ENCODE measurements at regions of chr14 and their contacts with region 1.

Region 1: GRCh38 chr14:89720741-89721315 is 233.7 kb downstream of the EFCAB11 start:
- DNase-seq: peak; percentile 57 to 93 (median 72)
- ATAC-seq: peak; percentile 93
- H3K4me3 ChIP-seq: peak overlapping the region; percentile 0
- H3K4me3 Mint-ChIP-seq: peak overlapping the region; percentile 65
- H3K27ac ChIP-seq: peak overlapping the region; percentile 85 to 88
- H3K27ac Mint-ChIP-seq: peak overlapping the region; percentile 95
- H3K4me1 ChIP-seq: peaks cover 88% of the 10 kb centered on the region
- H3K4me1 Mint-ChIP-seq: peaks cover 85% of the 10 kb centered on the region
- H3K27me3 ChIP-seq: no peaks in the 10 kb centered on the region
- H3K27me3 Mint-ChIP-seq: no peaks in the 10 kb centered on the region
- CTCF ChIP-seq: no peak

Region 2: GRCh38 chr14:89430391-89431236 is 290.2 kb before region 1 on chr14:
- CTCF ChIA-PET with region 1: no interaction called
- POLR2A ChIA-PET with region 1: interaction called, 12 read pairs
- intact Hi-C with region 1: no loop called
- DNase-seq: peak in 4 of 14 experiments; percentile 23 to 79 (median 76)
- ATAC-seq: peak; percentile 83
- H3K4me3 ChIP-seq: peak overlapping the region; percentile 50
- H3K4me3 Mint-ChIP-seq: peak overlapping the region; percentile 76
- H3K27ac ChIP-seq: peak overlapping the region; percentile 57 to 59
- H3K27ac Mint-ChIP-seq: peak overlapping the region; percentile 80
- H3K4me1 ChIP-seq: peaks cover 24% of the 10 kb centered on the region
- H3K4me1 Mint-ChIP-seq: peaks cover 54% of the 10 kb centered on the region
- H3K27me3 ChIP-seq: no peaks in the 10 kb centered on the region
- H3K27me3 Mint-ChIP-seq: no peaks in the 10 kb centered on the region
- CTCF ChIP-seq: no peak

Region 3: GRCh38 chr14:89589400-89590118 is 131.3 kb before region 1 on chr14:
- CTCF ChIA-PET with region 1: interaction called, 3 read pairs
- POLR2A ChIA-PET with region 1: interaction called, 5 read pairs
- intact Hi-C with region 1: loop called in 1 of 2 experiments (anchors 5 kb)
- DNase-seq: peak in 3 of 14 experiments; percentile 12 to 51 (median 49)
- ATAC-seq: no peak
- H3K4me3 ChIP-seq: no peak overlapping the region
- H3K4me3 Mint-ChIP-seq: peak overlapping the region; percentile 17
- H3K27ac ChIP-seq: no peak overlapping the region
- H3K27ac Mint-ChIP-seq: peak overlapping the region; percentile 2
- H3K4me1 ChIP-seq: peaks cover 39% of the 10 kb centered on the region
- H3K4me1 Mint-ChIP-seq: peaks cover 86% of the 10 kb centered on the region
- H3K27me3 ChIP-seq: no peaks in the 10 kb centered on the region
- H3K27me3 Mint-ChIP-seq: no peaks in the 10 kb centered on the region
- CTCF ChIP-seq: no peak

Region 4: DNA sequence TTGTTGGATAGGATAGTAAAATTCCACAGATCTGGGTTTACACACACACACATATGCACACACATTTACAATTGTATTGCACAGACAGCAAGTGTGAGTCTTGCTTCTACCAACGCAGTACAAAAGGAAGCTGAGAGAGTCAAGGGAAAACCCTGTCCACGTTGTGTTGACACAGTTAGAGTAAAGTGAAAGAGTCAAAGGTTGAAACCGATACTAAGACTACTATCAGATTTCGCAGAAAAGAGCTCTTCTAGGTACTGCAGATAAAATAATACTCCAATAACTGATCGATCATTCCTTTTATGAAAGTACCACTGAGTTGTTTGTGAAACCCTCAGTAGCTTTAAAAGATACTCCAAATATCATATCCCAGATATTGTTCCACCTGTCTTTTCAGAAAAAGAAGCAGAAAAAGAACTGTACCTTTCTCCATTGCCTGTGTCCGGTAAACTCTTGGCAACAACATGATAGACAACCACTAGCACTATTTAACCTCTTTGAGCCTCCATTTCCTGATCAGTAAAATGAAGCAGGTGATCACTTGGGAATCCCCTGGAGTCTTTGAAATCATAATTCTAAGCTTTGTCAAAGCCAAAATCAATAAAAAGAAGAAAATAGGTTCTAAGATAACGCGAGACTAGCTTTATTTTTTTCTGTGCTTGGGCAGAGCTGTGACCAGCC is 79.2 kb before region 1 on chr14:
- CTCF ChIA-PET with region 1: interaction called, 3 read pairs
- POLR2A ChIA-PET with region 1: interaction called, 32 read pairs
- intact Hi-C with region 1: no loop called
- DNase-seq: peak in 4 of 14 experiments; percentile 27 to 73 (median 70)
- ATAC-seq: peak; percentile 83
- H3K4me3 ChIP-seq: peak overlapping the region; percentile 24
- H3K4me3 Mint-ChIP-seq: peak overlapping the region; percentile 72
- H3K27ac ChIP-seq: peak overlapping the region; percentile 25 to 80
- H3K27ac Mint-ChIP-seq: peak overlapping the region; percentile 94
- H3K4me1 ChIP-seq: peaks cover 13% of the 10 kb centered on the region
- H3K4me1 Mint-ChIP-seq: peaks cover 59% of the 10 kb centered on the region
- H3K27me3 ChIP-seq: no peaks in the 10 kb centered on the region
- H3K27me3 Mint-ChIP-seq: no peaks in the 10 kb centered on the region
- CTCF ChIP-seq: no peak

Region 5: GRCh38 chr14:89701211-89702043 is 19.4 kb before region 1 on chr14:
- CTCF ChIA-PET with region 1: interaction called, 18 read pairs
- POLR2A ChIA-PET with region 1: interaction called, 35 read pairs
- intact Hi-C with region 1: loop called (anchors 1 to 2 kb)
- DNase-seq: peak; percentile 70 to 92 (median 80)
- ATAC-seq: peak; percentile 86
- H3K4me3 ChIP-seq: peak overlapping the region; percentile 62
- H3K4me3 Mint-ChIP-seq: peak overlapping the region; percentile 87
- H3K27ac ChIP-seq: peak overlapping the region; percentile 58 to 70
- H3K27ac Mint-ChIP-seq: peak overlapping the region; percentile 82
- H3K4me1 ChIP-seq: peaks cover 26% of the 10 kb centered on the region
- H3K4me1 Mint-ChIP-seq: peaks cover 49% of the 10 kb centered on the region
- H3K27me3 ChIP-seq: no peaks in the 10 kb centered on the region
- H3K27me3 Mint-ChIP-seq: no peaks in the 10 kb centered on the region
- CTCF ChIP-seq: no peak

Region 6: DNA sequence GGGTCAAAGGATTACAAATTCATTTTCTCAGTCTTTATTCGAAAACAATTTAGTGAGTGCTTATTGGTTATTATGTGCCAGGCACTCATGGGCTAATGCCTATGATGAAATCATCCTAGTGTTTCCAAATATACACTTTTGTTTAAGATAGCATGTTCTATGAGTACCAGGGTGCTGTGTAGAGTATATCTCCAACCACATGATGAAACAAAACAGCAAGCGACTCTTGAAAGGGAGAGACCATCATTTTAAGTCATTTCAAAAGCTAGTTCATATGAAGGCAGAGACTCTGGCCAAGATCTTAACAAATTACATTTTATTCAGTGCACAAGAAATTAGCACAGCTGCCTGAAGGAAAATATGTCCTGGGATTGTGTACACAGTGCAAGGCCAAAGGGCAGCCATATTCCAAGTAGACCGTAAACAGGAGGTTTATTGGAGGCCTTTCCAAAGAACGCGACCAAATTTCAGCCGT is 29.5 kb after region 1 on chr14:
- CTCF ChIA-PET with region 1: interaction called, 3 read pairs
- POLR2A ChIA-PET with region 1: interaction called, 14 read pairs
- intact Hi-C with region 1: no loop called
- DNase-seq: no peak
- ATAC-seq: no peak
- H3K4me3 ChIP-seq: no peak overlapping the region
- H3K4me3 Mint-ChIP-seq: no peak overlapping the region
- H3K27ac ChIP-seq: no peak overlapping the region
- H3K27ac Mint-ChIP-seq: no peak overlapping the region
- H3K4me1 ChIP-seq: no peaks in the 10 kb centered on the region
- H3K4me1 Mint-ChIP-seq: peaks cover 28% of the 10 kb centered on the region
- H3K27me3 ChIP-seq: no peaks in the 10 kb centered on the region
- H3K27me3 Mint-ChIP-seq: no peaks in the 10 kb centered on the region
- CTCF ChIP-seq: no peak

Region 7: DNA sequence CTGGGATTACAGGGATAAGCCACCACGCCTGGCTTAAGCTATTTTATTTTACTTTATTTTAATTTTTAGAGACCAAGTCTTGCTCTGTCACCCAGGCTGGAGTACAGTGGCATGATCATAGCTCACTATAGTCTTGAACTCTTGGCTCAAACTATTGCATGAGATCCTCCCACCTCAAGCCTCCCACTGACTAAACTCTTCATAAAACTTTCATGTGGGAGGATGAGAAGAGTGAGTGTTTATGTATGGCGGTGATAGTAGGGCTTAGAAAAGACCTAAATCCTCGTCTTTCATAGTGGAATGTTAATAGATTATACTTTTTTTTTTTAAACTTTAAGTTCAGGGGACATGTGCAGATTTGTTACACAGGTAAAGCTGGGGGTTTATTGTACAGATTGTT is 1812.8 kb after region 1 on chr14:
- CTCF ChIA-PET with region 1: no interaction called
- POLR2A ChIA-PET with region 1: no interaction called
- intact Hi-C with region 1: no loop called
- DNase-seq: no peak
- ATAC-seq: no peak
- H3K4me3 ChIP-seq: no peak overlapping the region
- H3K4me3 Mint-ChIP-seq: no peak overlapping the region
- H3K27ac ChIP-seq: no peak overlapping the region
- H3K27ac Mint-ChIP-seq: no peak overlapping the region
- H3K4me1 ChIP-seq: no peaks in the 10 kb centered on the region
- H3K4me1 Mint-ChIP-seq: no peaks in the 10 kb centered on the region
- H3K27me3 ChIP-seq: no peaks in the 10 kb centered on the region
- H3K27me3 Mint-ChIP-seq: peaks cover 14% of the 10 kb centered on the region
- CTCF ChIP-seq: no peak

Measured in CD4-positive, alpha-beta T cell (primary cell).